ENCODE measurements at regions of chr1 and their contacts with region 1.

Region 1: GRCh38 chr1:153749408-153750005 is 21.7 kb downstream of the INTS3 start:
- DNase-seq: peak; percentile 81 to 92
- ATAC-seq: peak; percentile 99 to 100
- H3K4me3 ChIP-seq: no peak overlapping the region
- H3K27ac ChIP-seq: no peak overlapping the region
- H3K4me1 ChIP-seq: no peaks in the 10 kb centered on the region
- CTCF ChIP-seq: peak; percentile 88
- EP300 ChIP-seq: no peak
- POLR2A ChIP-seq: no peak
- RAD21 ChIP-seq: peak; percentile 81 to 91

Region 2: GRCh38 chr1:153734396-153735089 is 15.0 kb before region 1 on chr1:
- CTCF ChIA-PET with region 1: interaction called, 24 read pairs
- POLR2A ChIA-PET with region 1: no interaction called
- DNase-seq: no peak
- ATAC-seq: no peak
- H3K4me3 ChIP-seq: no peak overlapping the region
- H3K27ac ChIP-seq: no peak overlapping the region
- H3K4me1 ChIP-seq: peaks cover 11% of the 10 kb centered on the region; the same call in 2 of the 3 replicates
- CTCF ChIP-seq: no peak
- EP300 ChIP-seq: no peak
- POLR2A ChIP-seq: no peak
- RAD21 ChIP-seq: no peak

Region 3: DNA sequence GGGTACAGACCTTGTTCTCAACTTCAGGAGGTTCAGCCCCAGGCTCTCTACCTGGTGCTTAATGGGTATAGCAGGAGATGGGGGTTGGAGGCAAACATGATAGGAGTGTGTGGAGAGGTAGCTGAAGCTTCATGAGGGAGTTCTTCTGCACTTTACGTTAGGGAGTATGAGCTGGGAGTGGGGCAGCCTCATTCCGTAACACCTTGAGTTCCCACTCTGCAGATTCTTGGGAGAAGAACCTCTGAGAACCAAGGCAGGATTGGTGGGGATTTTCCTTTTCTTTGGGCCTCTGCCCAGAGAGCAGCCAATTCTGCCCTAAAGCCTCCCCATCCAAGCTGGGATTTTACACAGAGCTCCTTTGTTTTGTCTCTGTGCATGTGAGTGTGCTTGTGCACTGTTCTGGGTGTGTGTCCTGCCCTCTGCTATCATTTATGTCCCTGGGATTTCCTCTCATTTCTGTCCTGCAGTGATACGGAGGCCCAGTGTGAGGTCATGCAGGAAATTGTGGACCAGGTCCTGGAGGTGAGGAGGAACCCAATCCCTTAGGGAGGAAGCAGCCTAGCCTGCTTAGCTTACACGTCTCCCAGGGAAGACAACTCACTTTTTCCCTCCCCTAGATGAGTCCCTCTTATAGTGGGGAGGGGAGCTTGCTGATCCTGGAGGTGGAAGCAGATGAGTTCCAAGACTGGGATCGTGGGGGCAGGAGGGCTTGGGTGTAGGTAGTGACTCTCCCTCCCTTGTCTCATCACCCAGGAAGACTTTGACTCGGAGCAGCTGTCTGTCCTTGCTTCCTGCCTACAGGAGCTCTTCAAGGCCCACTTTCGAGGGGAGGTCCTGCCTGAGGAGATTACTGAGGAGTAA is 14.1 kb after region 1 on chr1:
- CTCF ChIA-PET with region 1: interaction called, 36 read pairs
- POLR2A ChIA-PET with region 1: no interaction called
- DNase-seq: no peak
- ATAC-seq: no peak
- H3K4me3 ChIP-seq: no peak overlapping the region
- H3K27ac ChIP-seq: no peak overlapping the region
- H3K4me1 ChIP-seq: no peaks in the 10 kb centered on the region
- CTCF ChIP-seq: no peak
- EP300 ChIP-seq: no peak
- POLR2A ChIP-seq: no peak
- RAD21 ChIP-seq: no peak